ENCODE measurements at regions of chr14 and their contacts with region 1.

Region 1: DNA sequence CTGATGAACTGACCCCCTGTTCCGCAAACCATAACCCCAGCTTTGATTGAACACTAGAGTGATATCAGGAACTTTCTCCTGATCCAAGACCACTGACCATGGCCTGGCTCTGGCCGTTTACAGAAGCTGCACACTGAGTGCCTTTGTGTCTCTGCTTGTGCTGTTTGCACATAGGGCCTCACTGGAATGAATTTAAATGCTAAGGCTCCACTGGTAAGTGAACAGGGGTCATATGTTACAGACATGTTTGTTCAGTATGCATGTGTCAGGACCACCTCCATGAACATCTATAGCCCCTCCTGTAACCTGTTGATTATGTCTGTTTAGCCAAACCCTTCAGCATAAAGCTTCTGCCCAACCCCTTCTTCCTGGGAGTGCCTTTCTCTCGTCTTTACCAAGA is 1239.8 kb downstream of the TMEM121 start:
- DNase-seq: no peak
- H3K4me3 Mint-ChIP-seq: no peak overlapping the region
- H3K27ac Mint-ChIP-seq: no peak overlapping the region
- H3K4me1 Mint-ChIP-seq: peaks cover 34% of the 10 kb centered on the region
- H3K27me3 Mint-ChIP-seq: no peaks in the 10 kb centered on the region

Region 2: DNA sequence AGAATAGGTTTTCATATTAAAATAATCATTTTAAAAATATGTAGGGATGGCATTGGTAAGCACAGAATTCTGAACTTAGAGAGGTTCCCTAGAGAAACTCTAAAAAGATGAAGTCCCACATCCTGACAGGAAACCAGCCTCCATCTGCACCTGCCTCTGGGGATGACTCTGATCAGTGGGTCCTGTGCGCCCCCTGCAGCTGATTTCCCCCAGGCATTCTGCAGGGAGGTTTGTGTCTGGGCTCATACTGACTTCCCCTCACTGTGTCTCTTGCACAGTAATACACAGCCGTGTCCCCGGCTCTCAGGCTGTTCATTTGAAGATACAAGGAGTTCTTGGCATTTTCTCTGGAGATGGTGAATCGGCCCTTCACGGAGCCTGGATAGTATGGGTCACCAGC is 636.9 kb before region 1 on chr14:
- CTCF ChIA-PET with region 1: no interaction called
- intact Hi-C with region 1: loop called (anchors 10 kb)
- DNase-seq: peak; percentile 68
- H3K4me3 Mint-ChIP-seq: no peak overlapping the region
- H3K27ac Mint-ChIP-seq: no peak overlapping the region
- H3K4me1 Mint-ChIP-seq: peaks cover 32% of the 10 kb centered on the region
- H3K27me3 Mint-ChIP-seq: no peaks in the 10 kb centered on the region

Region 3: DNA sequence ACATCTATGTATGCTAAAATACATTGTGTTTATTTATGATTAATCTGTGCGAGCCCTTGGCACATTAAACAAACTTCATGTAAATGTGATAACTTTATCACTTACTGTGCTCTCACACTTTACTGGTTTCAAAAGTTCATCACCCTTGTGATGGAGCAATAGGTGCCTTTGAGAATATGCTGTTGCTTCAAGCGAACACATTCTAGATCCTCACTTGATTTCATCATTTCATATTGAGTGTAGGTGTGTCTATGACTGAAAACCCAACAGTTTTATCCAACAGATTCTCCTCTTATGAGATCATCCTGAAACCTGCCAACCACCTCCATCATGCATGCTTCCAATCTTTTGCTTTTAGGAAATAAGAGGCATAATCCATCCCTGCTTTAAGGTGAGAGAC is 385.4 kb before region 1 on chr14:
- CTCF ChIA-PET with region 1: no interaction called
- intact Hi-C with region 1: no loop called
- DNase-seq: no peak
- H3K4me3 Mint-ChIP-seq: no peak overlapping the region
- H3K27ac Mint-ChIP-seq: no peak overlapping the region
- H3K4me1 Mint-ChIP-seq: peaks cover 8% of the 10 kb centered on the region
- H3K27me3 Mint-ChIP-seq: no peaks in the 10 kb centered on the region

Region 4: GRCh38 chr14:106657460-106657859 is 108.7 kb before region 1 on chr14:
- CTCF ChIA-PET with region 1: interaction called, 7 read pairs
- intact Hi-C with region 1: loop called (anchors 2 kb)
- DNase-seq: peak; percentile 88
- H3K4me3 Mint-ChIP-seq: no peak overlapping the region
- H3K27ac Mint-ChIP-seq: no peak overlapping the region
- H3K4me1 Mint-ChIP-seq: peaks cover 17% of the 10 kb centered on the region
- H3K27me3 Mint-ChIP-seq: no peaks in the 10 kb centered on the region

Measured in activated naive CD4-positive, alpha-beta T cell treated with anti-CD3 and anti-CD28 coated beads for 36 hours (primary cell).